Testis (tissue), 5 donors: ENCODE measurements at regions of chr12 and their contacts with region 1.

Region 1: DNA sequence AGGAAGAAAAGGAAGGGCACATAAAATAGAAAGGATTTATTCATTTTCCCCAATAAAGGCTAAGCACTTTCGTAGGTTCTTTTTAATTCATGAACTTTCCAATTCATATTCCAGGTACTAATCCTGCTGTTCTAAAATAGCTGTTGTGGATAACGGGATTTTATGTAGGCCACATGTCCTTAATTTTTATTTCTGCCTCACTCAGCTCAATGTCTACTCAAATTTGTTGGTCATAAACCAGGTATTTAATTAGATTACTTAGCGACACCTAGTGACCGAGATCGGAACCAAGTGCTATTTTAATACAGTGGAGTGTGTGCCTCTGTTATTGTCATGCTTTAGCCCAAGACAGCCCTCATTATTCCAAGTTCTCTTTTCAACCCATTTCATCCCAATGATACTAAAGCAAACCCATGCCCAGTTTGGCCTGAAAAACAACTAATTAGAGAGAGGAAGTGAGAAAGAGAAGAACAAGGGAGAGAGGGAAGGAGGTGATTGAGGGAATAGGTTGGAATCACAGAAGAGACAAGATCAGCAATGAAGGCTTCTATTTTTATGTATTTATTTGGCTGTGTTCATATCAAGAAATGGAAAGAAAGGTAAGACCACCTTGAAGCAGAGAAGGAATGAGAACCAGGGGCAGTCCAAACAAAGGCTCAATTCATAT is 45.9 kb upstream of the IFNG-AS1 start:
- DNase-seq: peak; percentile 92
- H3K4me3 ChIP-seq: no peak overlapping the region
- H3K27ac ChIP-seq: no peak overlapping the region
- H3K4me1 ChIP-seq: no peaks in the 10 kb centered on the region
- H3K27me3 ChIP-seq: no peaks in the 10 kb centered on the region
- CTCF ChIP-seq: peak; percentile 70 to 73 (median 72)
- POLR2A ChIP-seq: no peak

Region 2: GRCh38 chr12:67355578-67356379 is 587.6 kb before region 1 on chr12:
- intact Hi-C with region 1: loop called (anchors 10 kb)
- DNase-seq: peak; percentile 19
- H3K4me3 ChIP-seq: no peak overlapping the region
- H3K27ac ChIP-seq: no peak overlapping the region
- H3K4me1 ChIP-seq: peaks cover 6% of the 10 kb centered on the region
- H3K27me3 ChIP-seq: no peaks in the 10 kb centered on the region
- CTCF ChIP-seq: peak in 2 of 3 experiments; percentile 27 to 44
- POLR2A ChIP-seq: no peak

Region 3: DNA sequence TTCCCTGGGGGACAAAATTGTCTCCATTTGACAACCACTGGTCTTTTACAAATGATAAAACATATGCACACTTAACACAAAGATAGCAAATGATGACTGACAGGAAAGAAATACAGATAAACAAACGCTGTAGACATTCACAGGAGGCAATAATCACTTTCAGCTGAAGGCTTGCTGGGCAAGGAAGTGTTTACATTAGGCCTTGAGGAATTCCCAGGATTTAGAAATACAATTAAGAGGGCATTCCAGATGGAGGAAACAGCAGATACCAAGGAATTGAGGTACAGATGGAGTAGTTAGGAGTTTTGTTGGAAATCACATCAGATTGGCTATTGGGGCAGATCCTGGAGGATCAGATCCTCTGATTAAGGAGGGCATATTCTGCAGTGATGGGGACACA is 200.9 kb before region 1 on chr12:
- intact Hi-C with region 1: no loop called
- DNase-seq: no peak
- H3K4me3 ChIP-seq: no peak overlapping the region
- H3K27ac ChIP-seq: no peak overlapping the region
- H3K4me1 ChIP-seq: no peaks in the 10 kb centered on the region
- H3K27me3 ChIP-seq: no peaks in the 10 kb centered on the region
- CTCF ChIP-seq: no peak
- POLR2A ChIP-seq: no peak

Region 4: DNA sequence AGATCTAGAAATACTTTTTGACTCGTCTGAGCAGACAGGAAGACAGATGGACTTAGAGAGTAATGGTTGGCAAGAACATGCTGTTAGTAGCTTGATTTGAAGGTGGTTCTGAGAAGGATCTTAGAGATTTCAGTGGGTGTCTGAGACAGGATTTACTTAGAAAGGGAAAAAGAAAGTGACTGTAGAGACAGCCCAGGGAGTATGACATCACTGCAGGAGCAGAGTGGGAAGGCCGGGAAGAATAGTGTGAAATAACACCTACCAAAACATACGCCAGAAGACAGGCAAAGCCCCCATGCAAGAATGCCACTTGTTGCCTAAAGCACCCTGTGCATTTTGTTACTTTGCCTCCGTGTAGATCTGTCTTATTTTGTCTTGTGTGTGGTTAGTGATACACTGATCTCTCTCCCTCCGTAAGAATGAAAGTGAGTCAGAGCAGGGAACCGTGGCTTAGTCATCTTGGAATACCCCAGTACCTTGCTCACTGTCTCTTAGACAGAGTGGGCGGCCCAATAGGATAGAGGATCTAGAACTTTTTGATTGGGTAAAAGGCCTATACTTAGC is 115.5 kb before region 1 on chr12:
- intact Hi-C with region 1: no loop called
- DNase-seq: no peak
- H3K4me3 ChIP-seq: peak overlapping the region in 1 of 2 donors; percentile 4
- H3K27ac ChIP-seq: peak overlapping the region; percentile 42 to 69
- H3K4me1 ChIP-seq: no peaks in the 10 kb centered on the region
- H3K27me3 ChIP-seq: no peaks in the 10 kb centered on the region
- CTCF ChIP-seq: no peak
- POLR2A ChIP-seq: no peak

Region 5: DNA sequence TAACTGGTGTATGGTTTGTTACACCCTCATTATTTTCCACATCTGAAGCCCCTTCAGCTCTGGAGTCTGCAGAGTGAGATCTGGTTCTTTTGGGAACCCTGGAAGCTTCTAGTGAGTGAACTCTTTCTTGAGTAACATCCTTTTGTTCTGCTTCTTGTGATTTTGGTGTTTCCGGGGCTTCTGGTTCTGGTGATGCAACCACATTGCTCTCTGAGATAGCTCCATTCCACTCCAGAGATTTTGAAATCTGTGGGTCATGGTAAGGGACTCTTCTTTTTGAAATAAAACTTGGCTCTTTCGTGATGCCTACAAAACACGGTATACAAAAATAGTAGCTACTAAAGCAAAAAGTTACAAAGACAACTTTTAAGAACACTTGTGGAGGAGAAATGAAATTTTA is 383.4 kb after region 1 on chr12:
- intact Hi-C with region 1: no loop called
- DNase-seq: no peak
- H3K4me3 ChIP-seq: no peak overlapping the region
- H3K27ac ChIP-seq: peak overlapping the region in 1 of 2 donors; percentile 56
- H3K4me1 ChIP-seq: peaks cover 6% of the 10 kb centered on the region
- H3K27me3 ChIP-seq: no peaks in the 10 kb centered on the region
- CTCF ChIP-seq: no peak
- POLR2A ChIP-seq: no peak